ENCODE measurements at regions of chr2 and their contacts with region 1.

Region 1: GRCh38 chr2:237766340-237766739 is 32.2 kb upstream of the RBM44 start:
- DNase-seq: no peak
- H3K4me3 ChIP-seq: no peak overlapping the region
- H3K27ac ChIP-seq: peak overlapping the region; percentile 17 to 51
- H3K4me1 ChIP-seq: peaks cover 0 to 21% (median 6%) of the 10 kb centered on the region in 4 donors
- H3K27me3 ChIP-seq: no peaks in the 10 kb centered on the region
- CTCF ChIP-seq: no peak

Region 2: DNA sequence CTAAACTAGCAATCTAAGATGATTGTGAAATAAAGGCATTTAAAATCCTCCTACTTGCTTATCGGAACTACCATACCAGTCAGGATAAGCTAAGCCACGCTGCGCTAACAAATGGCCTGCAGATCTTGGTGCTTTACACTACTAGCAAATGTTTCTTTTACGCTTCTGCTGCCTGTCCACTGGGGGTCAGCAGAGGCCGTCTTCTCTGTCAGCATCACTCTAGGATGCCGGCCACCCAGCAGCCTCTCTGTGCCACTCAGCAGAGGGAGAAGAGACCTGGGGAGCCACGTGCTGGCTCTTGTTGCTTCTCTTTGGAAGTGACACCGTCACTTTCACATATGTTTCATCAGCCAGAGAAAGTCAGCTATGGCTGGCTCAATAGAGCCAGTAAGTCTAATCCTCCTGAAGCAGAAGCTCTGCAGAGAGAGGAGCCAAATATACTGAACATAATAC is 644.1 kb before region 1 on chr2:
- intact Hi-C with region 1: loop called (anchors 10 kb)
- DNase-seq: peak; percentile 80 to 81
- H3K4me3 ChIP-seq: no peak overlapping the region
- H3K27ac ChIP-seq: no peak overlapping the region
- H3K4me1 ChIP-seq: no peaks in the 10 kb centered on the region
- H3K27me3 ChIP-seq: no peaks in the 10 kb centered on the region
- CTCF ChIP-seq: peak; percentile 75 to 81

Region 3: GRCh38 chr2:237512774-237513466 is 253.4 kb before region 1 on chr2:
- intact Hi-C with region 1: no loop called
- DNase-seq: peak; percentile 85 to 86
- H3K4me3 ChIP-seq: no peak overlapping the region
- H3K27ac ChIP-seq: no peak overlapping the region
- H3K4me1 ChIP-seq: peaks cover 0 to 10% (median 0%) of the 10 kb centered on the region in 4 donors
- H3K27me3 ChIP-seq: peaks cover 0 to 9% of the 10 kb centered on the region in 2 donors
- CTCF ChIP-seq: peak; percentile 83 to 93

Measured in tibial artery (tissue), 4 donors.